ENCODE measurements at regions of chr5 and their contacts with region 1.

Region 1: GRCh38 chr5:149114403-149115312 is 26.6 kb upstream of the ABLIM3 start:
- DNase-seq: peak; percentile 84
- ATAC-seq: peak; percentile 96
- H3K4me3 ChIP-seq: no peak overlapping the region
- H3K27ac ChIP-seq: peak overlapping the region; percentile 20; the same call in 1 of the 2 replicates
- H3K4me1 ChIP-seq: peaks cover 5% of the 10 kb centered on the region; the same call in 1 of the 2 replicates
- H3K27me3 ChIP-seq: no peaks in the 10 kb centered on the region
- CTCF ChIP-seq: peak; percentile 87
- POLR2A ChIP-seq: no peak; the same call in 1 of the 2 replicates
- RAD21 ChIP-seq: peak; percentile 90

Region 2: DNA sequence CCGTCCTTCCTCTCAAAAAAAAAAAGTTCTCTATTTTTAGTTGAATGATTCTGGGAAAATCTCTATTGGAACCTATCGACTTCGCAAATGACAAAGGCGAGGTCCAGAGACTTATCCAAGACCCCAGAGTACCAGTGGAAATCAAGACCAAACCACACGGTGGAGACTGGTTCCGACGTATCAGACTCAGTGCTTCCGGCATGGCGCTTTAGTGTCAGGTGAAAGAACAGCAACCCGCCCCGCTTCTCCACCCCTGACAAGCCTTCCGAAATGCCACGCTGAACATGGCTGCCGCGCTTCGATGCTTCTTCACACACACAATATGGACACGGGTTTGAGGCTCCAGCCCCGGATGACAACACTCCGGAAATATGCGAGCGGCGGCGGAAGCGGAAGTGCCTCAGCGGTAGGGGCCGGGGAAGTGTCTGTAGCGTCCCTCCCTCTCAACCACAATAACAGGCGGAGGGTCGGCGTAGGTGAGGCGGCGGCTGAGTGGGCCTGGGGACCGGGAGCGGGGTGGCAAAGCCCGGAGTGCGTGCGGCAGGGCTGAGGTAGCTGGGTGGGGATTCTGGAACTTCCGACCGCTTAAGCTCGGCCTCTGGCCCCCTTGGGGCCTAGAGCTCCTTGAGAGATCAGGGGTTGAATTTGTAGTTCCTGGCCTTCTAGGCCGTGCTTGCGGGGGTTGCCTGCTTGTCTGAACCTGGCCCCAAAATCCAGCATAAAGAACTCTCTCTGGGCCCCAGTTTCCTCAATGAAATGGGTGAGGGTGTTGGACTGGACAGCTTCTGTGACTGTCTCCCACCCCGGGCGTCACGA is 730.9 kb before region 1 on chr5 and contains the start of gene FBXO38:
- CTCF ChIA-PET with region 1: no interaction called
- POLR2A ChIA-PET with region 1: no interaction called
- dilution Hi-C with region 1: no loop called
- in situ Hi-C with region 1: no loop called
- intact Hi-C with region 1: loop called (anchors 5 kb)
- DNase-seq: peak; percentile 95
- ATAC-seq: peak; percentile 89
- H3K4me3 ChIP-seq: peak within 1 kb of the TSS; percentile 70
- H3K27ac ChIP-seq: peak within 1 kb of the TSS; percentile 81
- H3K4me1 ChIP-seq: peaks cover 7% of the 10 kb centered on the region
- H3K27me3 ChIP-seq: no peaks in the 10 kb centered on the region
- CTCF ChIP-seq: no peak
- POLR2A ChIP-seq: peak; percentile 89
- RAD21 ChIP-seq: no peak
- total RNA-seq, gene FBXO38: 70.1 and 86.7 TPM in 2 replicates

Region 3: GRCh38 chr5:148730943-148731861 is 383.5 kb before region 1 on chr5:
- CTCF ChIA-PET with region 1: interaction called, 48 read pairs
- POLR2A ChIA-PET with region 1: no interaction called
- dilution Hi-C with region 1: no loop called
- in situ Hi-C with region 1: loop called (anchors 5 kb)
- intact Hi-C with region 1: loop called (anchors 1 kb)
- DNase-seq: peak; percentile 87
- ATAC-seq: peak; percentile 88
- H3K4me3 ChIP-seq: no peak overlapping the region; the same call in 1 of the 2 replicates
- H3K27ac ChIP-seq: no peak overlapping the region
- H3K4me1 ChIP-seq: peaks cover 11% of the 10 kb centered on the region
- H3K27me3 ChIP-seq: peaks cover 5% of the 10 kb centered on the region
- CTCF ChIP-seq: peak; percentile 100
- POLR2A ChIP-seq: no peak
- RAD21 ChIP-seq: peak; percentile 87

Region 4: GRCh38 chr5:148820461-148821395 is 293.9 kb before region 1 on chr5:
- CTCF ChIA-PET with region 1: interaction called, 4 read pairs
- POLR2A ChIA-PET with region 1: no interaction called
- dilution Hi-C with region 1: no loop called
- in situ Hi-C with region 1: no loop called
- intact Hi-C with region 1: loop called (anchors 1 kb)
- DNase-seq: peak; percentile 50
- ATAC-seq: peak; percentile 77
- H3K4me3 ChIP-seq: no peak overlapping the region
- H3K27ac ChIP-seq: no peak overlapping the region
- H3K4me1 ChIP-seq: 0 out of 2 replicates have a peak, but pooled peaks cover 2% of the 10 kb centered on the region
- H3K27me3 ChIP-seq: no peaks in the 10 kb centered on the region; the same call in 1 of the 2 replicates
- CTCF ChIP-seq: peak; percentile 59
- POLR2A ChIP-seq: no peak
- RAD21 ChIP-seq: peak; percentile 57

Region 5: DNA sequence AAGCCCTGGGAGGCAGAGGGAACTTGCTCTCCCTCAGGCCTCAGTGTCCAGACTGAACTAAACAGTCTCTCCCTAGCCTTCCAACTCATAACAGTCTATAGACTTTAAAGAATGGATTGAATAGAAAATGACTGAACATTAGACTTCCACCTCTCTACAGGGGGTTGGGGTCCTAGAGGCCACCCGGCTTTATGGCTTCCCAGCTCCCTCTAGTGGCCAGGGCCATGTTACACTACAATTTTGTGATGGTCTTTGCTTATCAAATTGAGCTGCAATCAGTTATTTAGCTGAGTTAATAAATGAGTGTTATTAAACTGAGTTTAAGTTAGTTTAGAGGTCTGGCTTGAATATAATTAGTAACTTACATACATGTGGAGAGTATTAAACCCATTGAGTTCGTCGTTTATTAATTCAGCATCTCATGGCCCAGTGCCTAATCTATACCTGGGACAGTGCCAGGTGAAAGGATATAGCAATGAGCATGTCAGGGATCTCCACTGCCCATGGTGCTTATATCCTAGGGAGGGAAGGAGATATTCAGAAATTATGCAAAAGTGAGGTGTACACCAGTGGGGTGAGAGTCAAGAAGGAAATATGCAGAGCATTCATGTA is 157.0 kb before region 1 on chr5:
- CTCF ChIA-PET with region 1: interaction called, 3 read pairs
- POLR2A ChIA-PET with region 1: no interaction called
- dilution Hi-C with region 1: no loop called
- in situ Hi-C with region 1: no loop called
- intact Hi-C with region 1: loop called (anchors 1 kb)
- DNase-seq: peak; percentile 43
- ATAC-seq: peak; percentile 73
- H3K4me3 ChIP-seq: no peak overlapping the region
- H3K27ac ChIP-seq: no peak overlapping the region
- H3K4me1 ChIP-seq: no peaks in the 10 kb centered on the region
- H3K27me3 ChIP-seq: no peaks in the 10 kb centered on the region
- CTCF ChIP-seq: peak; percentile 83
- POLR2A ChIP-seq: no peak
- RAD21 ChIP-seq: peak; percentile 86

Region 6: GRCh38 chr5:149035372-149035790 is 79.3 kb before region 1 on chr5:
- CTCF ChIA-PET with region 1: interaction called, 28 read pairs
- POLR2A ChIA-PET with region 1: no interaction called
- dilution Hi-C with region 1: no loop called
- in situ Hi-C with region 1: loop called (anchors 5 kb)
- intact Hi-C with region 1: loop called (anchors 1 kb)
- DNase-seq: peak; percentile 83
- ATAC-seq: peak; percentile 87
- H3K4me3 ChIP-seq: no peak overlapping the region
- H3K27ac ChIP-seq: no peak overlapping the region
- H3K4me1 ChIP-seq: peaks cover 9% of the 10 kb centered on the region
- H3K27me3 ChIP-seq: no peaks in the 10 kb centered on the region
- CTCF ChIP-seq: peak; percentile 98
- POLR2A ChIP-seq: peak; percentile 34; the same call in 1 of the 2 replicates
- RAD21 ChIP-seq: peak; percentile 98

Region 7: DNA sequence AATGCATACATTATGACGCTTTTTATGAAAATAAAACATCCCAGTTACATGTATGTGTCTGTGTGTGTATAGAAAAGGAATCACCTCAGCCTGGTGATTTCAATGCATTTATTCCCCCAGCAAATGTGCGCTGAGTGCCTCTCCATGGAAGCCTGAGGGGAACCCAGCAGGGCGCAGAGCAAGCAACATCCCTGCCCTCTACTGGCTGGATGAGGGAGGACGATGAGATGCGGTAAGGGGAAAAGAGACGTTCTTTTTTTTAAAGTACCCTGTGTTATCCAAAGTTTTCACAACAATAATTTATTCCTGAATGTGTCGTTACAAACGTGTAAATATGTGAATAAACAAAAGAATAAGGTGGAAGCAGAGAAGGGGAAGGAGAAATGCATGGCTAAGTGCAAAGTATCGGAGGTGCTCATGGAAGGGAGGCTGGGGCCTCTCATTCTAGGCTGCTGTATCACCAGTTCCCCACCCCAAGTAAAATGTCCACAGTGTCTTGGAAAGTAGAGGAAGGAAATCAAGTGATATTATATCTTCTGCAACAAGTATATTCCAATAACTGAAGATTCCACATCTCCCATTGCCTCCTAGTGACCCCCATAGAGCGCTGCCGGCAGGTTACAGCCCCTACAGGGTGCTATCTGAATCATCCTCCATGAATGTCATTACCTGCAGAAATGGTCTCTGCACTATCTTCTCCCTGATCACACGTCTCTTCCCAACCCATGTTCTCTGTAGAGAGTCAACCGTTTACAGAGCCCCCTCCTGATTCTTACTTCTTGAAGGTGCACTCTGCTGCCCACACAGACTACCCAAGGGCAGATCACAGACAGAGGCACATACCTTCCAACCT is 13.6 kb after region 1 on chr5:
- CTCF ChIA-PET with region 1: interaction called, 25 read pairs
- POLR2A ChIA-PET with region 1: no interaction called
- dilution Hi-C with region 1: no loop called
- in situ Hi-C with region 1: no loop called
- intact Hi-C with region 1: no loop called
- DNase-seq: peak; percentile 41
- ATAC-seq: peak; percentile 80
- H3K4me3 ChIP-seq: no peak overlapping the region
- H3K27ac ChIP-seq: no peak overlapping the region
- H3K4me1 ChIP-seq: peaks cover 10% of the 10 kb centered on the region
- H3K27me3 ChIP-seq: no peaks in the 10 kb centered on the region
- CTCF ChIP-seq: peak; percentile 65
- POLR2A ChIP-seq: no peak
- RAD21 ChIP-seq: peak; percentile 51

Region 8: DNA sequence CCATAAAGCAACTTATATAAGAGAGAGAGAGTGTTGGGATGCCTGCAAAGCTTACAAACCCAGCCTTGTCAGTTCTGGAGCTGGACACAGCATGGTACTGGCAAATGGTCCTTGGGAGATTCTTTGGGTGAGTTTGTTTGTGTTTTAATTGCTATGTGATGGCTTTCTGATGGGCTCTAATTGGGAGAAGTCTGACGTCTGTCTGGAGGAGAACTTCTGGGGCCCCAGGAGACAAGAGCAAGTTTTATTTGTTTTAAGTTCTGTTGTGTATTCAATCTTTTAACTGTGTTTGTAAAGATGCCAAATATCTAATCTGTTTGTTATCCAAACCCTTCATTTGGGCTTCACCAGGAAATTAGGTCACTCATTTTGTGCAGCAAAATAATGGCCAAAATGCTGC is 106.7 kb after region 1 on chr5:
- CTCF ChIA-PET with region 1: no interaction called
- POLR2A ChIA-PET with region 1: no interaction called
- dilution Hi-C with region 1: no loop called
- in situ Hi-C with region 1: no loop called
- intact Hi-C with region 1: no loop called
- DNase-seq: peak; percentile 83
- ATAC-seq: peak; percentile 64
- H3K4me3 ChIP-seq: no peak overlapping the region
- H3K27ac ChIP-seq: peak overlapping the region; percentile 88
- H3K4me1 ChIP-seq: peaks cover 41% of the 10 kb centered on the region
- H3K27me3 ChIP-seq: no peaks in the 10 kb centered on the region
- CTCF ChIP-seq: no peak
- POLR2A ChIP-seq: no peak
- RAD21 ChIP-seq: no peak